Thyroid gland (tissue), 4 donors: ENCODE measurements at regions of chr7 and their contacts with region 1.

Region 1: GRCh38 chr7:26365077-26365900 is 73.6 kb downstream of the SNX10 start:
- DNase-seq: peak; percentile 58 to 61
- H3K4me3 ChIP-seq: no peak overlapping the region
- H3K27ac ChIP-seq: no peak overlapping the region
- H3K4me1 ChIP-seq: peaks cover 0 to 4% of the 10 kb centered on the region in 2 donors
- H3K27me3 ChIP-seq: no peaks in the 10 kb centered on the region
- CTCF ChIP-seq: peak in 5 of 6 experiments; percentile 25 to 93 (median 71)
- POLR2A ChIP-seq: no peak

Region 2: GRCh38 chr7:25894902-25895791 is 470.1 kb before region 1 on chr7:
- intact Hi-C with region 1: loop called (anchors 2 kb)
- DNase-seq: peak; percentile 49 to 62
- H3K4me3 ChIP-seq: no peak overlapping the region
- H3K27ac ChIP-seq: no peak overlapping the region
- H3K4me1 ChIP-seq: peaks cover 0 to 7% of the 10 kb centered on the region in 2 donors
- H3K27me3 ChIP-seq: no peaks in the 10 kb centered on the region
- CTCF ChIP-seq: peak; percentile 26 to 77 (median 50)
- POLR2A ChIP-seq: no peak

Region 3: GRCh38 chr7:26083113-26083512 is 282.2 kb before region 1 on chr7:
- intact Hi-C with region 1: loop called (anchors 5 kb)
- DNase-seq: no peak
- H3K4me3 ChIP-seq: no peak overlapping the region
- H3K27ac ChIP-seq: no peak overlapping the region
- H3K4me1 ChIP-seq: no peaks in the 10 kb centered on the region
- H3K27me3 ChIP-seq: no peaks in the 10 kb centered on the region
- CTCF ChIP-seq: no peak
- POLR2A ChIP-seq: no peak

Region 4: DNA sequence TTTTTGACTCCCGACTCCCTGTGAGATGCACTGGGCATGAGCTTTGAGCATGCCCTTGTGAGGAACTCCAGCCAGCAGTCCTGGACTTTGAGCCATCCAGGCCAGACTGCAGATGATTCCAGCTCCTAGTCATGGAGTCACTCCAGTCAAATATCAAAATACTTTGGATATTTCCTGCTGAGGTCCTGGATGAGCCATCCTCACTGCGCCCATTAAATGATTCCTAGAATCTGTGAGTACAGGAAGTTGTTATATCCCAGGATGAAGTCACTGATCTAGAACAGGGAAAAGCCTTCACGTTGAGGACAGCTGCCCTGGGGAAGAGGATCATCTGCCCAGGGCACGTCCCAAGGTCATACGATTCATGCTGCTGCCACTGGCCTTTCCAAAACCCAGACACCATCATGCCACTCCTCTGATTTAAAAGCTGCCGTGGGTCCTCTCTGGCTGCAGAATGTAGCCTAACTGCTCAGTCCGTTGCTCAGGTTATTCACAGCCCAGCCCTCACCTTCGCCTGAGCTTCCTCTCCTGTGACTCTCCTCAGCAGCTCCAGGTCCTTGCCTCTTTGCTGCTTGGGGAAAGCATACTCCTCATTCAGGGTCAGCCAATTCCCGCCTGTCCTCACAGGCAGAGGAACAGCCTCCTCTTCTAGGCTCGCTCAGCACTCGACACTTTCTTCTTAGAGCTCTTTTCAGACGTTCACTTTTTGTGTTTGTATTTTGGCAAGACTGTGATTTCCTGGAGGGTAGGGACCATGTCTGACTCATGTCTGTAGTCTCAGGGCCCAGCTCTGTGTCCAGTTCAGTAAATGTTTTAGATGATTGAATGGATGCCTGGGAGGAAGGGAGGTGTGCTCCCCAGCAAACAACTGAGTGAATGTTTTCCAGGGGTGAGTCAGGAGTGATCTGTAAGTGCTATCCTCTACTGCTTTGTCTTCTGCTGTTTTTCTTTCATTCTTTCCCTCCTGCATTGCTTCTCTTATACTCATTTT is 84.2 kb after region 1 on chr7:
- intact Hi-C with region 1: no loop called
- DNase-seq: no peak
- H3K4me3 ChIP-seq: no peak overlapping the region
- H3K27ac ChIP-seq: no peak overlapping the region
- H3K4me1 ChIP-seq: no peaks in the 10 kb centered on the region
- H3K27me3 ChIP-seq: no peaks in the 10 kb centered on the region
- CTCF ChIP-seq: no peak
- POLR2A ChIP-seq: no peak

Region 5: DNA sequence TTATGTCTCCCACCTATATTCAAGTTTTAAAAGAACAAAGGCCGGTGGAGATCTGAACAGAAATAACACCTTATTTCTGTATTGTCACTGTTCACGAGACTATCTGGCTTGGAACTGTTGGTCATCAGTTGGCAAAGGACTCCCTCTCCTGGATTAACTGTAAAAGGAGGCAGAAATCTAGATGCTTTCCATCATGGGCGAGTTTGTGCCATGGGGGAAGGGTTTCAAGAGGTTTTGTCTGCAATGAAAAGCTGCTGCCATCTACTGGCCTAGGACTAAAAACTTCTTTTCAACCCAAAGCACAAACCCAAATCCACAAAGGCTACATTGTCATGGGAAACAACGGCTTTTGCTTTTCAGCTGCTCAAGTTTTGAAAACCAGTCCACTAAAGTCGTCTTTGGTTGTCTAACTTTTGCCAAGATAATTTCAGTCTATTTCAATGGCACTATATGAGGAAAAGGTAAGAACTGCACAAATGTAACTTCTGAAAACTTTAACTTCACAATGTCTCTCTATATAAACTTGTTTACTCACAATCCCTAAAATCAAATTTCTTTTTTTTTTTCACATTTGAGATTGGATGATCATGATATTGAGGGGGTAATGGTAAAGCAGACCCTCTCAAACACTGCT is 302.3 kb after region 1 on chr7:
- intact Hi-C with region 1: loop called (anchors 5 kb)
- DNase-seq: peak; percentile 69 to 76
- H3K4me3 ChIP-seq: no peak overlapping the region
- H3K27ac ChIP-seq: no peak overlapping the region
- H3K4me1 ChIP-seq: no peaks in the 10 kb centered on the region
- H3K27me3 ChIP-seq: no peaks in the 10 kb centered on the region
- CTCF ChIP-seq: peak; percentile 11 to 95 (median 74)
- POLR2A ChIP-seq: no peak